AG04449 (cell line): ENCODE measurements at regions of chr17 and their contacts with region 1.

Region 1: DNA sequence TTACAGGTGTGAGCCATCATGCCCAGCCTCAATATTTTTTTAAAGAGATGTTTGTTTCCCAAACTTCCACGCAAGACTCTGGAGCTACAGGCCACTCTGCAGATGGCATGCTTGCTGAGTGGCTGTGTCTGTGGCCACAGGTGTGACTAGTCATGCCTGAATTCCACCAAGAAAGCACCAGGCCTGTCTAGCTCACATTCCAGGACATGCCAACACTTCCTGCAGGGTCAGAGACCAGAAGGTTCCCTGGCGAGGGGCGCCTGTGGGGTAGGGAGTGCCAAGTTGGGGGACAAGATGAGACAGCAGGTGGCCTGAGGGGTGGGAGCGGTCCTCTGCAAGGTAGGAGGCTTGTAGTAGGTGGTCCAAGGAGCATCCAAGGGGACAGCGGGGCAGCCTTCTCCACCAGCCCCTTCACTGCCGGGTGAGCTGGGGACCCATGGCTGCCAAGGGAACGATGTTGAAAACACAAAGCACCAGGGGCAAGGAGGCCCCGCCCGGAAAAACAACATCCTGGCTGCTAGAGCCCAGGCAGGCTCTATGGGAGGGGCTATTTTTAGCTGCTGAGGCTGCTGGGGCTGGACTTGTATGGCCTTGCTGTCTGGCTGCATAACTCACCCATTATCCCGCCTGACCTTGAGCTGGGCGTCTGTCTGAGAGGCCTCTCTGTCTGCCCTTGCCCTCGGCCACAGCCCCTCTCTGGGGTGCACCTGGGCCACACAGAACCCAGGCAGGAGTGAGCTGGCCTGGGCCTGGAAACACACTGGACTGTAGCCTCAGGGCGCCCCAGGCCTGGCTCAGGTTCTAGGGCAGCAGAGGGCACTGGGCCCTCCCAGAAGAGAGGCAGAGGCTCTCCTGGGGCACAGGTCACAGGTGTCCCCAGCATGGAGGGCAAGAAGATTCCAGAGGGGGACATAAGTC is 5.7 kb downstream of the TRIM47 start:
- DNase-seq: no peak
- H3K4me3 ChIP-seq: no peak overlapping the region
- CTCF ChIP-seq: no peak

Region 2: GRCh38 chr17:75779231-75779986 is 93.3 kb before region 1 on chr17:
- CTCF ChIA-PET with region 1: no interaction called
- POLR2A ChIA-PET with region 1: interaction called, 11 read pairs
- DNase-seq: peak; percentile 98
- H3K4me3 ChIP-seq: peak overlapping the region; percentile 93
- CTCF ChIP-seq: no peak

Region 3: GRCh38 chr17:75837871-75838270 is 34.8 kb before region 1 on chr17:
- CTCF ChIA-PET with region 1: no interaction called
- POLR2A ChIA-PET with region 1: no interaction called
- DNase-seq: no peak
- H3K4me3 ChIP-seq: no peak overlapping the region
- CTCF ChIP-seq: no peak

Region 4: DNA sequence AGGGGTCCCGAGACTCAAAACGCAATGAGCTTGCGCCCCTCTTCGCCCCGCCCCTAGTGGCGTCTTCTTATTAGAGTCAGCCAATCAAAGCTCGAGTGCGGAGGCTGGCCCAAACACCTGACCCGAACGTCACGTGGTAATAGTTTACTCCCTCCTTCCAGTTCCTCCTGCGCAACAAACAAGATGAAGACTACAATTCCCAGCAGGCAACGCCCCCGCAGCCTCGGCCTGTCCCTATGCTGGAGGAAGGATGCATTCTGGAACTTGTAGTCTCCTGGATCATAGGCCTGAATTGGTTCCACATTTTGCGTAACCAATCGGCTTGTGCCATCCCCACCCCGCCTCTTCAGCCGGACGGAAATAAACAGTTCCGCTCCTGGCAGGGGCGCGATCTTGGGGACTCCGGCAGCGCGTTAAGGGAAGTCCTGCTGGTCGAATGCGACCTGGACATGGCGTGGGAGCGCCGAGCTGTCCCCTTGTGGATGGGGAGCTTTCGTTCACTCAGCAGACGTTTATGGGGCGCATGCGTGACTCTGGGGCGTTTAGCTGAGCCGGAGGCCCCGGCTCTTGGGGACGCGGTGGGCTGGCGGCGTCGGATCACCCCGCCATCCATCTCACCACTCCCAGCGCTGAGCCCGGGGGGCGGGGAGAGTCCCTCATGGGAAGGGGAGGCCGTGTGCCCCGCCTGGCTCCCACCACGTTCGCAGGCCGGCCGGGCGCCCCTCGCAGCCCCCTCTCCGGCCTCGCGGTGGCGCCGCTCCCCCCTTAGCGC is 17.2 kb before region 1 on chr17 and contains the start of gene WBP2:
- CTCF ChIA-PET with region 1: interaction called, 24 read pairs
- POLR2A ChIA-PET with region 1: interaction called, 5 read pairs
- DNase-seq: peak; percentile 99
- H3K4me3 ChIP-seq: peak within 1 kb of the TSS; percentile 97
- CTCF ChIP-seq: peak; percentile 57

Region 5: GRCh38 chr17:75861927-75862317 is 10.8 kb before region 1 on chr17:
- CTCF ChIA-PET with region 1: interaction called, 24 read pairs
- POLR2A ChIA-PET with region 1: interaction called, 4 read pairs
- DNase-seq: no peak
- H3K4me3 ChIP-seq: no peak overlapping the region
- CTCF ChIP-seq: no peak